Activated CD8-positive, alpha-beta T cell treated with anti-CD3 and anti-CD28 coated beads for 36 hours (primary cell): ENCODE measurements at regions of chr15 and their contacts with region 1.

Region 1: DNA sequence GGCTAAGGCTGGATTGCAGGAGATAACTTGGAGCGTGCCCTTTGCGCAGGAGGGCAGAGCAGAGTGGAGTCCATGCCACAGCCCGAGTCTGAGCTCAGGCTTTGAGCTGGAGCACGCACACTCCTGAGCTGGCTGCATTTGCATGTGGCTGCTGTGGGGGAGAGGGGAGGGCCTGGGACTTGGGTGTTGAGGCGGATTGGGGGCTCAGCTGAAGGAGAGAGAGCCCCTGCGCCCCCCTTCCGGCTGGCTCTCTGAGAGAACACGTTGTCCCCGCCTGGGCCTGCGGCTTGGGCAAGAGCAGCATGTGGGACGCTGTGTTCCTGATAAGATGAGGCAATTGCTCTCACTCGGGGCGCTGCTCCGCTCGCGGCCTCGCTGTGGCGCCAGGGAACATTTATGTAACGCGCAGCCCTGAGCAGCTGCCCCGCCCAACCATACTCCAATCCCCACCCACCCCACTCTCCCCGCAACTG is 39.1 kb downstream of the KLF13 start:
- DNase-seq: peak; percentile 95
- ATAC-seq: peak; percentile 66
- H3K4me3 Mint-ChIP-seq: peak overlapping the region; percentile 78
- H3K27ac Mint-ChIP-seq: peak overlapping the region; percentile 99
- H3K4me1 Mint-ChIP-seq: peaks cover 100% of the 10 kb centered on the region
- H3K27me3 Mint-ChIP-seq: no peaks in the 10 kb centered on the region
- CTCF ChIP-seq: peak; percentile 58

Region 2: GRCh38 chr15:31098953-31099740 is 266.5 kb before region 1 on chr15:
- CTCF ChIA-PET with region 1: no interaction called
- POLR2A ChIA-PET with region 1: no interaction called
- intact Hi-C with region 1: no loop called
- DNase-seq: no peak
- ATAC-seq: no peak
- H3K4me3 Mint-ChIP-seq: no peak overlapping the region
- H3K27ac Mint-ChIP-seq: no peak overlapping the region
- H3K4me1 Mint-ChIP-seq: no peaks in the 10 kb centered on the region
- H3K27me3 Mint-ChIP-seq: peaks cover 2% of the 10 kb centered on the region
- CTCF ChIP-seq: no peak

Region 3: GRCh38 chr15:31215490-31216214 is 150.0 kb before region 1 on chr15:
- CTCF ChIA-PET with region 1: interaction called, 9 read pairs
- POLR2A ChIA-PET with region 1: interaction called, 8 read pairs
- intact Hi-C with region 1: loop called (anchors 5 kb)
- DNase-seq: peak; percentile 86
- ATAC-seq: peak; percentile 92
- H3K4me3 Mint-ChIP-seq: peak overlapping the region; percentile 73
- H3K27ac Mint-ChIP-seq: peak overlapping the region; percentile 73
- H3K4me1 Mint-ChIP-seq: peaks cover 18% of the 10 kb centered on the region
- H3K27me3 Mint-ChIP-seq: no peaks in the 10 kb centered on the region
- CTCF ChIP-seq: peak; percentile 86

Region 4: GRCh38 chr15:31226021-31226420 is 139.7 kb before region 1 on chr15:
- CTCF ChIA-PET with region 1: no interaction called
- POLR2A ChIA-PET with region 1: no interaction called
- intact Hi-C with region 1: no loop called
- DNase-seq: no peak
- ATAC-seq: no peak
- H3K4me3 Mint-ChIP-seq: no peak overlapping the region
- H3K27ac Mint-ChIP-seq: no peak overlapping the region
- H3K4me1 Mint-ChIP-seq: peaks cover 4% of the 10 kb centered on the region
- H3K27me3 Mint-ChIP-seq: no peaks in the 10 kb centered on the region
- CTCF ChIP-seq: no peak

Region 5: DNA sequence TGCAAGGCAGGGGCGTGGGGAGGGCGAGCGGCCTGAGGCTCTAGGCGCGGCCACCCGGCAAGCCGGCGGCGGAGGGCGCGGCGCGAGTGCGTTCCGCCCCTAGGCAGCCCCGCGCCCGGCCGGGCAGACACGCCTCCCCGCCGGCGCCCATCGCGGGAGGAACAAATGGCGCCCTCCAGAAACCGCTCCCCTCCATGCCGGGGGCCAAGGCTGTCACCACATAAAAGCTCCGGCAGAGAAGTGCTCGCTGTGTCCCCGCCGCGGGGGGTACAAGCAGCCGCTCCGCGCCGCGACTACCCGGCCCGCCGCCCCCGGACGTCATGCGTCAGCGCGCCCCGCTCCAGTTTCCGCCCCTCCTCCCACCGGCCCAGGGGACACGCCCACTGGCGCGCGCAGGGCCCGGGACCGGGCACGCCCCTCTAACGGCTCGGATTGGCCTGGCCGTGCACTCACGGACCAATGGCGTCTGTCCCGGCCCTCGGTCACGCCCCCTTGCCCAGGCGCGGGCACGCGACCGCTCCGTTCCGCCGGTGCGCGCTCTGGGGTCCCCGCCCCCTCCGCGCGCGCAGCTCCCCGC is 39.4 kb before region 1 on chr15:
- CTCF ChIA-PET with region 1: interaction called, 8 read pairs
- POLR2A ChIA-PET with region 1: interaction called, 10 read pairs
- intact Hi-C with region 1: no loop called
- DNase-seq: peak; percentile 99
- ATAC-seq: peak; percentile 86
- H3K4me3 Mint-ChIP-seq: peak overlapping the region; percentile 86
- H3K27ac Mint-ChIP-seq: peak overlapping the region; percentile 75
- H3K4me1 Mint-ChIP-seq: peaks cover 60% of the 10 kb centered on the region
- H3K27me3 Mint-ChIP-seq: no peaks in the 10 kb centered on the region
- CTCF ChIP-seq: no peak

Region 6: GRCh38 chr15:31352911-31353811 is 12.5 kb before region 1 on chr15:
- CTCF ChIA-PET with region 1: interaction called, 47 read pairs
- POLR2A ChIA-PET with region 1: interaction called, 444 read pairs
- intact Hi-C with region 1: no loop called
- DNase-seq: peak; percentile 84
- ATAC-seq: peak; percentile 62
- H3K4me3 Mint-ChIP-seq: peak overlapping the region; percentile 59
- H3K27ac Mint-ChIP-seq: peak overlapping the region; percentile 99
- H3K4me1 Mint-ChIP-seq: peaks cover 96% of the 10 kb centered on the region
- H3K27me3 Mint-ChIP-seq: no peaks in the 10 kb centered on the region
- CTCF ChIP-seq: no peak

Region 7: DNA sequence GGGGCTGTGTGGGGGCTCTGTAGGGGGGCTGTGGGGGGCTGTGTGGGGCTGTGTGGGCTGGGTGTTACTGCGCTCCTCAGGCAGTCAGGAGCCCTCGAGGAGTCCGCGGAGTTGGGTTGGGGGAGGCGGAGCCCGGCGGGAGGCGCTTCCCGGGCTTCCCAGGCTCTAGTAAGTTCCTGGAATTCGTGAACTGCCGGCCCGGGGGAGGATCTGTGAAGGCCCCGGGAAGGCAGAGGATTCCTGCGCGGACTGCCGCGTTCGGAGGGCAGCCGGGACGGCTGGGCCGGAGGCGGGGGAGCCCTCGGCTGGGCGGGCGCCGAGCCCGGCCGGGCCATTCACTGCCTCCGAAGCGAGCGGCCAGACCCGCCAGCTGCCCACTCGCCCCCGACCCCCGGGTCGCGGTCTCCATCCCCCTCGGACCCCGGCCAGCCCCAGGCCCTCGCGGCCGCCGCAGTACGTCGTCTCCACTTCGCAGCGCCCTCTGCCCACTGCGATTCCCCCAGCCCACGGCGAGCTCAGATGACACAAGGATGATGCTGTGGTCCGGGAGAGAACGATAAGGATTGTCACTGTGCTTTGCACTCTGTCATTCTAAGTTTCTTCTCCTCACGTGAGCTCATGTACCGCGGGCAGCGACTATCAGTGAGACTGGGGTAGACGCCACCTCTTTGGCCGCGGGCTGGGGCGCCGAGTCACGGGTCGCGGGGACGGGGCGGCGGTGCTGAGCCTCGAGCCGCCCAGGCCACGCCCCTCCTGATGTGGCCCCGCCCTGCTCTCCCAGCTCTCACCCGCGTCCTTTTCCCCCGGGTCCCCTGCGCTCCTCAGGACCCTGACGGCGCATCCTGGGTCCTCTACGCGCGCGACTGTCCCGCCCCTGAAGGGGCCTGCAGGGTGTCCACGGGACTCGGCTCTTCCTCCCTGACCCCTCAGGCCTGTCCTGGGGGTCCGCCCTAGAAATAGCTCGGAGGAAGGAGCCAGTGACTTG is 26.3 kb after region 1 on chr15:
- CTCF ChIA-PET with region 1: interaction called, 13 read pairs
- POLR2A ChIA-PET with region 1: interaction called, 12 read pairs
- intact Hi-C with region 1: no loop called
- DNase-seq: peak; percentile 89
- ATAC-seq: peak; percentile 87
- H3K4me3 Mint-ChIP-seq: peak overlapping the region; percentile 86
- H3K27ac Mint-ChIP-seq: peak overlapping the region; percentile 91
- H3K4me1 Mint-ChIP-seq: peaks cover 53% of the 10 kb centered on the region
- H3K27me3 Mint-ChIP-seq: no peaks in the 10 kb centered on the region
- CTCF ChIP-seq: no peak

Region 8: DNA sequence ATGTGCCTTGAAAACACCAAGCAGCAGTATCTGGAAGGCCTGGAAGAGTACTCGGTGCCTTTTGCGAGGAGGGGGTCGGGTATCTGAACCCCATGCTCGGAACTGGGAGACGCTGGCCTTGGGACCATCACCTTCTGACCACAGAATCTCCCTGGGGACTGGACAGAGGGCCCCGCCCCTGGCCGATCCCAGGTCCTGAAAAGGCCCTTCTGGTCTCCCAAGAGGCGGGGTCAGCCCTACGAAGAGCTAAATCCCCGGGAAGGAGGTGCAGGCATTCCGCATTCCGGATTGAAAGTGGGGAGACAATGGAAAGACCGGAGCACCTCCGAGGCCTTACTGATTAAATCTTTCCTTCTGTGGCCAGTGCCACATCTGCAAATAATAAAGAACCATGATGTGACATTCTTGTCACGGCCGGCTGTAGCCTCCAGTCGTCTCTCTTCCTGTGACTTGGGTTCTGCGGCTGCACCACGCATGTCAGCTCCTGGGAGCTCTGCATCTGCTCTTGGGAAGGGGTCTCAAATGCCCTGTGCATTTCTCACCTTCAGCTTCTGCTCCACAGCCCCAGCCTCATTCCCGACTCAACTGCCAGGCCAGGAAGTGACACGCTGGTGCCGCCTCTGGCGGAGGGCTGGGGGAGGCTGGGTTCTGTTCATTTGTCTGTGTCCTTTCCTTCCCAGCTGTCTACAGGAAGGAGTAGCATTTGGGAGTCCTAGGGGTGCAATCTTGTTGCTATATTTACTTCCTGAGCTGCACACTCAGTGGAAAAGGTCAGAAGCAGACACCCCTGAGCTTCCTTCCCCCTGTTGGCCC is 134.5 kb after region 1 on chr15:
- CTCF ChIA-PET with region 1: no interaction called
- POLR2A ChIA-PET with region 1: no interaction called
- intact Hi-C with region 1: no loop called
- DNase-seq: no peak
- ATAC-seq: no peak
- H3K4me3 Mint-ChIP-seq: no peak overlapping the region
- H3K27ac Mint-ChIP-seq: no peak overlapping the region
- H3K4me1 Mint-ChIP-seq: peaks cover 5% of the 10 kb centered on the region
- H3K27me3 Mint-ChIP-seq: no peaks in the 10 kb centered on the region
- CTCF ChIP-seq: no peak

Region 9: GRCh38 chr15:31740203-31740602 is 374.5 kb after region 1 on chr15:
- CTCF ChIA-PET with region 1: no interaction called
- POLR2A ChIA-PET with region 1: no interaction called
- intact Hi-C with region 1: no loop called
- DNase-seq: no peak
- ATAC-seq: no peak
- H3K4me3 Mint-ChIP-seq: no peak overlapping the region
- H3K27ac Mint-ChIP-seq: no peak overlapping the region
- H3K4me1 Mint-ChIP-seq: no peaks in the 10 kb centered on the region
- H3K27me3 Mint-ChIP-seq: peaks cover 6% of the 10 kb centered on the region
- CTCF ChIP-seq: no peak